Activated CD4-positive, alpha-beta memory T cell treated with anti-CD3 and anti-CD28 coated beads, Interleukin-2, amount 10 ng/mL, durations not matched to agents 7 days and 5 days (primary cell): ENCODE measurements at regions of chr6 and their contacts with region 1.

Region 1: DNA sequence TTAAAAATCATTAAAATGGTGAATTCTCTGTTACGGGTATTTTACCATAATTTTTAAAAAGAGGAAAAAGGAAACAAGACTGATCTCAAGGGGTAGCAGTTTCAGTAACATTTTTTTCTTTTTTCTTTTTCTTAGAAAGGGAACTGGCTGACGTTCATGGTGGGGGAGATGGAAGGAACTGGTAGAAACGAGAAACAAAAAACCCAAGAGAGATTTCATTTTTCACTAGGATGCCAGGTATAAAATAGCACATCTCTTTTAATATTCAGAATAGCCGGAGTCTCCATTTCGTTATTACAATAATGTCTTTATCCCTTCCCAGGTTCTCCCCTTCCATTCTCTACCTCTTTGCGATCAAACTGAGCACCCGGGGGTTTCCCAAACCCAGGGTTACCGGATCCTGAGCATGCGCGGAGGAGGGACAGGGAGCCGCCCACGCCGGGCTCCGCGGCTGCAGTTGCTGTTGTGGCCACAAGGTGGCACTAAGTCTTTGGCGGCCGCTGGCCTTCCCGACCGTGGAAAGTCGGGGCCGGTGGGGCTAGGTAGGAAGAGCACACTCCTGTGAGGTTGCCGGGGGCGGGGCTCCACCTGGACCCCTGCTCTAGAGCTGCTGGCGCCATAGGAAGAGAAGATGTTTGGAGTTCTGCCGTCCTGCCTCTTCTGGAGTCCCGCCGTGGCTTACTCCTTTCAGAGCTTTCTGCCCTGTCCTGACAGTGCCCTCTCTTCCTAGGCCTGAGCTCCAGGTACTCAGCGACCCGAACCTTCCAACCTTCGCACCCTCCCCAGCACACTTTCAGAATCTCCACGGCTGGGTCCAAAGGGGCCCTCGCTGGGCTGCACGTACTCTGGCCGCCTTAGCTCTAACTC is 146.8 kb downstream of the SH3BGRL2 start:
- DNase-seq: peak; percentile 82
- H3K4me3 Mint-ChIP-seq: peak overlapping the region; percentile 63
- H3K27ac Mint-ChIP-seq: no peak overlapping the region
- H3K4me1 Mint-ChIP-seq: peaks cover 12% of the 10 kb centered on the region
- H3K27me3 Mint-ChIP-seq: no peaks in the 10 kb centered on the region

Region 2: DNA sequence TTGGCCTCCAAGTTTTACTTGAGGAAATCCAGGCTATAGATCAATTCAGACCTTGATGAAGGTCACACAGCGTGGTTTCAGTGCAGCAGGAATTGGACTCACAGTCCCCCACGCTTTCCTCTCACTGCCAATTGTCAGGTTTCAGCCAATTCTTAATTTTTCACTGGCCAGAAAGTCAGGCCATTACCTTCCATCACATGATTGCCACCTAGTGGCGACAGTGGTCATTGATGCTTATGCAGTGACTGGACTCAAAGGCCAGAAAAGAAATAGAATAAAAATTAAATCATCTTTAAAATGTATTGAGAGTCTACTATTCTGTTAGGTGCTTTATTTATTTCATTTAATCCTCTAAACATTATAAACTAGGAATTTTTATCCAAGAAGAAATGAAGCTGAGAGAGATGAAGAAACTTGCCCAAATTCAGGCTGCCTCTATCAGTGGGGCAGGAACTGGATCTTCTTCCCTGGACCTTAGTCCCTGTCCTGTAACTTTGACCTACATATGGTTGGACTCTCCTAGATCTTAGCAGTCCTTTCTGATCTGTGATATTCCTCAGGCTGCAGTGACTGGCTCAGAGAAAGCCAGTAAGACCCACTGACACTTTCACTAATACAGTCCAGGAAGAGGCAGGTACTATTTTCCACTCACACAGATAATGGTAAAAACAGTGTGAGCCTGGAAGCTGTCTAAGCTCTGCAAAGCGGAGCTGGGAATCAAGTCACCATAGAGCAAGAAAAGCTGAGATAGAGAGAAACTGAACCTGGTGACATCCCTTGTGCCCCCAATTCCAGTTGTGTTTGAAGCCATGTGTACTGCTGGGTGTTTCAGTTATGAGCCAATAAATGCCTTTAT is 36.1 kb after region 1 on chr6:
- CTCF ChIA-PET with region 1: interaction called, 12 read pairs
- POLR2A ChIA-PET with region 1: no interaction called
- DNase-seq: peak; percentile 63
- H3K4me3 Mint-ChIP-seq: no peak overlapping the region
- H3K27ac Mint-ChIP-seq: no peak overlapping the region
- H3K4me1 Mint-ChIP-seq: no peaks in the 10 kb centered on the region
- H3K27me3 Mint-ChIP-seq: peaks cover 5% of the 10 kb centered on the region